Activated CD4-positive, alpha-beta T cell treated with anti-CD3 and anti-CD28 coated beads for 36 hours (primary cell): ENCODE measurements at regions of chr10 and their contacts with region 1.

Region 1: GRCh38 chr10:68901104-68901927 is at the start of gene DDX50:
- DNase-seq: peak; percentile 98
- ATAC-seq: peak; percentile 97
- H3K4me3 Mint-ChIP-seq: peak within 1 kb of the TSS; percentile 98
- H3K27ac Mint-ChIP-seq: peak within 1 kb of the TSS; percentile 99
- H3K4me1 Mint-ChIP-seq: peaks cover 48% of the 10 kb centered on the region
- H3K27me3 Mint-ChIP-seq: peaks cover 4% of the 10 kb centered on the region
- total RNA-seq, gene DDX50: 61.6 to 81.6 TPM

Region 2: GRCh38 chr10:68074775-68075549 is 826.4 kb before region 1 on chr10 and contains the start of gene HERC4:
- CTCF ChIA-PET with region 1: no interaction called
- POLR2A ChIA-PET with region 1: no interaction called
- intact Hi-C with region 1: loop called in 1 of 2 experiments (anchors 10 kb)
- DNase-seq: peak; percentile 94
- ATAC-seq: peak; percentile 83
- H3K4me3 Mint-ChIP-seq: peak within 1 kb of the TSS; percentile 98
- H3K27ac Mint-ChIP-seq: peak within 1 kb of the TSS; percentile 93
- H3K4me1 Mint-ChIP-seq: peaks cover 31% of the 10 kb centered on the region
- H3K27me3 Mint-ChIP-seq: no peaks in the 10 kb centered on the region
- total RNA-seq, gene HERC4: 39.5 to 50.8 TPM

Region 3: DNA sequence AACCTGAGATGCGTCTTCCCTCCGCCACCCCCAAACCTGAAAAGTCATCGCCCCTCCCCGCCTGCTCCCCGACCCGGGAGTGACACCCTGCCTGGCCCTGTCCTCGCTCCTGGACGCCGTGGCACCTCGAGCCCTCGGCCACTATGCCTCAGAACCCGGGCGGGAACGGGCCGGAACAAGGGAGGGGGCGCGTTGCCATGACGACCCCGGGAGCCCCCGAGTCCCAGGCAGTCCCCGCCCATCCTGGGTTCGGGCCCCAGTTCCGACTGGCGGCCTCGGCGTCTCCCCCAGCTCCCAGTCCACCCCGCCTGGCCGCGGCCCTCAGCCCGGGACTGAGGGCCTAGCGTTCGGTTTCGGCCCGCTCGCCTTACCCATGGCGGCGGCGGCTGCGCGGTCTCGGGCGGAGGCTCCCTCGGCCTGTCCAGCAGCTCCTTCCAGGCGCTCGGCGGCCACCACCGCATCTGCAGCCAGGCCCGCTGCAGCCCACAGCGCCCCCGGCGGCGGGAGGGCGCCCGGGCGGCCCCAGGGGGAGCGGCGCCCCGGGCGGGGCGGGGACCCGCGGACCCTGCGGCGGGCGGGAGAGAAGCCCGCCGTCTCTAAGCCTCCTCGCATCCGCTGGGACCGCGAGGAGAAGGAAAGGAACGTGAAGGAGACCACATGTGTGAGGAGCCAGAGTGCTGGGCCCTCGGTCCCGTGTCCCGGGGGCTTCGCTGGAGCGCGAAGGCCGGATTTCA is 494.3 kb before region 1 on chr10 and contains the start of gene RUFY2:
- CTCF ChIA-PET with region 1: no interaction called
- POLR2A ChIA-PET with region 1: no interaction called
- intact Hi-C with region 1: loop called in 1 of 2 experiments (anchors 1 kb)
- DNase-seq: peak; percentile 86
- ATAC-seq: peak; percentile 95
- H3K4me3 Mint-ChIP-seq: peak within 1 kb of the TSS; percentile 83
- H3K27ac Mint-ChIP-seq: peak within 1 kb of the TSS; percentile 76
- H3K4me1 Mint-ChIP-seq: peaks cover 19% of the 10 kb centered on the region
- H3K27me3 Mint-ChIP-seq: no peaks in the 10 kb centered on the region
- total RNA-seq, gene RUFY2: 9.1 to 9.5 TPM

Region 4: GRCh38 chr10:68550747-68551411 is 350.4 kb before region 1 on chr10:
- CTCF ChIA-PET with region 1: interaction called, 10 read pairs
- POLR2A ChIA-PET with region 1: no interaction called
- intact Hi-C with region 1: loop called (anchors 2 kb)
- DNase-seq: peak; percentile 58
- ATAC-seq: peak; percentile 80
- H3K4me3 Mint-ChIP-seq: no peak overlapping the region
- H3K27ac Mint-ChIP-seq: no peak overlapping the region
- H3K4me1 Mint-ChIP-seq: no peaks in the 10 kb centered on the region
- H3K27me3 Mint-ChIP-seq: no peaks in the 10 kb centered on the region

Region 5: DNA sequence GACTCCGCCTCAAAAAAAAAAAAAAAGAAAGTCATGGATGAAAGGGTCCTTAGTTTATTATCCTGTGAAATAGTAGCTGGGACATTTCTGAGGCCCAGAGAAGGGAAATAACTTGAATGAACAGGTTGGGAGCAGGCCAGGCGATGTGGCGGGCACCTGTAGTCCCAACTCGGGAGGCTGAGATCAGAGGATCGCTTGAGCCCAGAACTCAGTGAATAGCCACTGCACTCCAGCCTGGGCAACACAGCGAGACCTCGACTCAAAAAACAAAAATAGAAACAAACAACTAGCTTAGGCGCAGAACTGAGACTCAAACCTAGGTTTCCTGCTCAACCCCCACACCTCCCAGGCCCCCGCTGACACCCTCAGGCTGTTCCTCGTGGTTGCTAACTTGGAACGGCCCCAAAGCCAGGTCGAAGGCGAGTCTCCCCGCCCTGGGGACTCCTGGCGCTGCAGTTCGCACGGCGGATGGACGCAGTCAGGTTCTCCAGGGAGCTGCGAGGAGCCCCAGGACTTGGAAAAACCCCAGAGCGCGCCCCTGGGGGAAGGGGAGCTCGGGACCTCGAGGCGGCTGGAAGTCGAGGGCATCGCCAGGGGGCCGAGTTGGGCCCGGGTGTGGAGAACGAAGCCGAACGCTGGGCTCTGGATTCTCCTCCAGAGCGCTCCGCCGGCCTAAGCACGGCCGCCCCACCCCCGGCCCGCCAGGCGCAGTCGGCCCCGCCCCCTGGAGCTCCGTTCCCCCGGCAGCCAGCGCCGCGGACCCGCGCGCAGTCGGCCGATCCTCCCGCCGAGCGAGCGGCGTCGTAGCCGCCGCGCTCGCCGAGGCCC is 74.3 kb before region 1 on chr10 and contains the start of gene STOX1:
- CTCF ChIA-PET with region 1: interaction called, 4 read pairs
- POLR2A ChIA-PET with region 1: interaction called, 4 read pairs
- intact Hi-C with region 1: loop called (anchors 1 to 2 kb)
- DNase-seq: peak; percentile 81
- ATAC-seq: peak; percentile 89
- H3K4me3 Mint-ChIP-seq: peak within 1 kb of the TSS; percentile 72
- H3K27ac Mint-ChIP-seq: peak within 1 kb of the TSS; percentile 37
- H3K4me1 Mint-ChIP-seq: peaks cover 19% of the 10 kb centered on the region
- H3K27me3 Mint-ChIP-seq: no peaks in the 10 kb centered on the region
- total RNA-seq, gene STOX1: 0.74 to 0.87 TPM

Region 6: GRCh38 chr10:68988530-68989316 is 87.4 kb after region 1 on chr10 and contains the start of gene KIFBP:
- CTCF ChIA-PET with region 1: no interaction called
- POLR2A ChIA-PET with region 1: no interaction called
- intact Hi-C with region 1: loop called in 1 of 2 experiments (anchors 1 kb)
- DNase-seq: peak; percentile 91
- ATAC-seq: peak; percentile 89
- H3K4me3 Mint-ChIP-seq: peak within 1 kb of the TSS; percentile 86
- H3K27ac Mint-ChIP-seq: peak within 1 kb of the TSS; percentile 86
- H3K4me1 Mint-ChIP-seq: peaks cover 51% of the 10 kb centered on the region
- H3K27me3 Mint-ChIP-seq: no peaks in the 10 kb centered on the region
- total RNA-seq, gene KIFBP: 12.9 to 15.6 TPM

Region 7: DNA sequence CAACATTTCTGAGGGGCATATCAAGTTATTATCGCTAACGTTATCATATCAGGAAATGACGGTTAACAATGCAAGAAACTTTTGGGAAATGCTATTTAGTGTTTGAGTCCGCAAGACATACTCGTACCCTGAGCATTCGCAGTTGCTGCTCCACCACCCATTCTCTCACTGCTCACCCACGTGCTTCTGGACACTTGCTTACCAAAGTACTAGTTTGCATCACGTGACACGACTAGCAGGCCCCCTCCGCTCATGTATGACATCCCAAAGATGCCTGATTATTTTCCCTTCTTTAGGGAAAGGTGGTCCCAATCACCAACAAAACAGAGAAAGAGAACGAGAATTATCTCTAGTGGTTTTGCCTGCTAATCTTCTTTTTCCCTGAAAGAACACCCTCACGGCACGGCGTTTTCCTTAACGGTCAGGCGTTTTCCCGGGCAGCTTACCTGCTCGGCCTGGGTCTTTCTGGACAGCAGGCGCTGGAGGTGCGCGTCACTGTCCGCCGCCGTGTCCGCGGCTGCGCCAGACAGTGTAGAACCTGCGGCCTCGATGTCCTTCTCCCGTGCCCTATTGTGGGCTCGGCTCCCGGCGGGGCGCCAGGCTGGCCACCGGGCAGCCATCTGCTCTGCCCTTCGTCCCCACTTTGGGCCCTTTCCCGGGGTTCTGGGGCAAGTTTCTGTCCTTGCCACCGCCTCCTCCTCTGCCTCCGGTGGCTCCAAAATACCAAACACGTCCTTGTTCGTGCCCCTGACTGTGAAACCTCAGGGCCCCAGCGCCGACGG is 278.6 kb after region 1 on chr10 and contains the start of gene SUPV3L1:
- CTCF ChIA-PET with region 1: no interaction called
- POLR2A ChIA-PET with region 1: no interaction called
- intact Hi-C with region 1: loop called in 1 of 2 experiments (anchors 1 kb)
- DNase-seq: peak; percentile 91
- ATAC-seq: peak; percentile 89
- H3K4me3 Mint-ChIP-seq: peak within 1 kb of the TSS; percentile 90
- H3K27ac Mint-ChIP-seq: peak within 1 kb of the TSS; percentile 100
- H3K4me1 Mint-ChIP-seq: peaks cover 38% of the 10 kb centered on the region
- H3K27me3 Mint-ChIP-seq: no peaks in the 10 kb centered on the region
- total RNA-seq, gene SUPV3L1: 46.6 to 54.1 TPM